ENCODE measurements at regions of chr10 and their contacts with region 1.

Region 1: GRCh38 chr10:33476757-33477273 is 142.3 kb upstream of the NRP1 start:
- DNase-seq: no peak
- H3K4me3 ChIP-seq: no peak overlapping the region
- H3K27ac ChIP-seq: no peak overlapping the region
- H3K4me1 ChIP-seq: no peaks in the 10 kb centered on the region
- H3K27me3 ChIP-seq: no peaks in the 10 kb centered on the region
- CTCF ChIP-seq: no peak

Region 2: GRCh38 chr10:33412653-33413361 is 64.0 kb before region 1 on chr10:
- CTCF ChIA-PET with region 1: no interaction called
- POLR2A ChIA-PET with region 1: no interaction called
- intact Hi-C with region 1: loop called (anchors 10 kb)
- DNase-seq: no peak
- H3K4me3 ChIP-seq: no peak overlapping the region
- H3K27ac ChIP-seq: no peak overlapping the region
- H3K4me1 ChIP-seq: no peaks in the 10 kb centered on the region
- H3K27me3 ChIP-seq: no peaks in the 10 kb centered on the region
- CTCF ChIP-seq: no peak